ENCODE measurements at regions of chr6 and their contacts with region 1.

Region 1: DNA sequence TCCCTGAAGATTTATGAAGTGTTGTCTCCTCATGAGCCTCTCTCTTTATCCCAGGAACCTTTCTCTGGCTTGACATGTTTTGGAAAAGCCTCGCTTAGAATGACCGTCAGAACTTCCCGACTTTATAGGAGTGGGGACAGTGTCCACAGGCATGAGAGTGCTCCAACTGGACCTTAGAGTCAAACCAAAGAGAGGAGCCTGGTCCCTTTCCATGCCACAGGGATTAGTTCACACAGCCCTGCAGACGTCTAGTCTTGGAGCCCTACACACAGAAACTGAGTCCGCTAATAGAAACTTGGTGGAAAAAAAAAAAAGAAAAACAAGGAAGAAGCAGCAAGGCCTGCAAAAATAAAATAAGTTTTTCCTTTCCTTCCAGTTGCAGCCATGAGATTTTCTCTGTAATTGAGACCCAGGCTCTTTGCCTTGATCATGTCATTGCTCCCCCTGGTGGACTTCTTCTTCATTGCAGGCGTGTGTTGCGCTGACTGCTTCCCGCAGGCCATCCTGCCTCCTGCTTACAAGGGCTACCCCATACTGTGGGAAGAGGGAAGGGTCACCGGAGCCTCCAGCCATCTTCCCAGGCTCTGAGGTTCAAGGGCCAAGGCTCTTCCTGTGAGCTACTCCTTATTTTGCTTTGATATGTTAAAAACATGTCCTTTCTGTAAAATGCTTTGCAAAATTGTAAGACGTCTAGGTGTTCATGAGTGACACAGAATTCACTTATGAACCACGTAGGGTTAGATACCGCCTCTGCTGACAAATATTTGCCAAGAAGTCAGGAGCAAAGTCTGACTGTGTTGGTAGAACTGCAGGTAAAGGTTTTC is 201.0 kb downstream of the UST start:
- ATAC-seq: peak; percentile 90 to 99 (median 92)
- H3K4me3 ChIP-seq: no peak overlapping the region
- H3K27ac ChIP-seq: no peak overlapping the region
- H3K4me1 ChIP-seq: no peaks in the 10 kb centered on the region

Region 2: DNA sequence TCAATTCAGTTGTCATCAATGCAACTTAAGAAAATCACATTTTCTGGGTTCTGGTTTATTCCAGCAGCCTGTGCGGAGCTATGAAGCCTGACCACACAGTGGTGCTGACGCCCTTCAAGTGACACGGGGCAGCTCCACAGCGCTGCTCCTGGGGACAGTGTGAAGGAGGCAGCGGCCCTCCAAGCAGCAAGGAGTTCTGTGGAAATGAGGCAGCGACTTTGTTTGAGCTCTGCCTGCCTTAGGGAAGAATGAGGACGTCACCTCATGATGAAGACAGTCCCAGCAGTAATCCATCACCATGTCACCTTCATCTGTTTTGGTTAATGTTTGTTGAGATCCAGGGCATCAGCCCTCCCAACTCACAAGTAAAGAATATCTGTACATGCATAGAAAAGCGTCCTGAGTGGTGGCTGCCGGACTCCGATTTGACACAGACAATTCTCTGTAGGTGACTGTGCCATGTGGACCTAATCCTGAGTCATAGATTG is 369.5 kb before region 1 on chr6:
- in situ Hi-C with region 1: loop called in 6 of 9 experiments (anchors 25 kb)
- ATAC-seq: peak; percentile 100
- H3K4me3 ChIP-seq: no peak overlapping the region
- H3K27ac ChIP-seq: no peak overlapping the region
- H3K4me1 ChIP-seq: peaks cover 3% of the 10 kb centered on the region in 2 donors

Region 3: DNA sequence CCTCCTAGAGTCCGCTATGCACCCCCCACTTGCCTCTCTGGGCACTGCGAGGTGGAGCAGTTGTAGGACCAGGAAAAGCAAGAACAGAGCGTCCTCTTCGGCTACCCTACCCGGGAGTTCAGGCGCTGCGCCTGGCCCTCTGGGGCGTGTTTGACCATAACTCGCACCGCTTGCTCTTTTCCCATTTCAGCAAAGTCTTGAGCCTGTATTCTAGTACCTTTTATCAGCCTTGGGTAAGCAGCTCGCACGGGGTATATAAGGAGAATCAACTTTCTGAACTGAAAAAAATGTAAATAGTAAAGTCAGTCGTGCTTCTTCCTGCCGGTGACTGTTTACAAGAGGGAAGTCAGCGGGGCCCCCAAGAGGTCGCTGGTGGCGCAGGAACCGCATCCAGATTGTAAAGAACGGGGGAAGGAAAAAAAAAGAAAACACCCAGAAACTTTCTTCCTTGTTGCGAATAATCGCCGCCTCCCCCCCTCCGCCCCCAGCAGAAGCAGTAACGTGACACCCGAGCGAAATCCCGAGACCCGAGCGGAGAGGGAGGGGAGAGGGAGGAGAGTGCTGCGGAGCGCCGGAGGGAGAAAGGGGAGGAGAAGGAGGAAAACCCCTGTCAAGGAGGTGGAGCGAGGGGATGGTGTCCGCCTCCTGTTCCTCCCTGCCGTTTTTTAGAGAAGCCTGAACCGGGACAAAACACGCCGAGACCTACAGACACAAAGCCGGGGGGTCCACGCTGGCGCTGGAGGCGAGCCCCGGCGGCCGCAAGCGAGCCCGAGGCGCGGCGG is 201.3 kb before region 1 on chr6 and contains the start of gene UST:
- in situ Hi-C with region 1: loop called in 5 of 9 experiments (anchors 5 to 25 kb)
- ATAC-seq: peak; percentile 58 to 86 (median 64)
- H3K4me3 ChIP-seq: peak within 1 kb of the TSS; percentile 61 to 82 (median 77)
- H3K27ac ChIP-seq: peak within 1 kb of the TSS in 1 of 2 donors; percentile 63
- H3K4me1 ChIP-seq: peaks cover 5 to 6% of the 10 kb centered on the region in 2 donors
- total RNA-seq, gene UST: 5.2 to 22.9 (median 7.8) TPM

Region 4: GRCh38 chr6:148760568-148761526 is 187.0 kb before region 1 on chr6:
- in situ Hi-C with region 1: loop called in 1 of 9 experiments (anchors 25 kb)
- ATAC-seq: peak; percentile 75 to 86 (median 79)
- H3K4me3 ChIP-seq: no peak overlapping the region
- H3K27ac ChIP-seq: no peak overlapping the region
- H3K4me1 ChIP-seq: peaks cover 13 to 19% of the 10 kb centered on the region in 2 donors

Measured in motor neuron (in vitro differentiated cells).